RWPE1 (cell line): ENCODE measurements at regions of chr16 and their contacts with region 1.

Region 1: DNA sequence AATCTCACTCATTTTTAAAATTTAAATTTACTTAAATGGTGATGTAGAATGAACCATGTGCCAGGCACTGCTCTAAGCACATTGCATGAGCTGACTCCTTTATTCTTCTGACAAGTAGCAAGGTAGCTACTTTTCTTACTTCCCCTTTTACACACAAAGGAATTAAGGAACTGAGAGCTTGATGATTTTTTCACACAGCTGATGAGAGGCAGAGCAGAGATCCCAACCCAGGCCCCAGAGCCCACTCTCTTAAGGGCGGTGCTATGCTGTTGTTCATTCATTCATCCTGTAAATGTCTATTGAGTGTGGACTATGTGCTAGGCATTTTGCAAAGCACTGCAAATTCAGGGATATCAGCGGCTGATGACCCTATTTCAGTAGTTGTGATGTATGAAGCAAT is 17.9 kb downstream of the SEC14L5 start:
- DNase-seq: no peak
- H3K27ac ChIP-seq: no peak overlapping the region
- CTCF ChIP-seq: no peak

Region 2: GRCh38 chr16:4911831-4912417 is 64.2 kb before region 1 on chr16:
- CTCF ChIA-PET with region 1: no interaction called
- POLR2A ChIA-PET with region 1: no interaction called
- DNase-seq: peak; percentile 23
- H3K27ac ChIP-seq: peak overlapping the region; percentile 48
- CTCF ChIP-seq: no peak

Region 3: GRCh38 chr16:4958510-4959437 is 17.3 kb before region 1 on chr16:
- CTCF ChIA-PET with region 1: no interaction called
- POLR2A ChIA-PET with region 1: interaction called, 10 read pairs
- DNase-seq: no peak
- H3K27ac ChIP-seq: peak overlapping the region; percentile 68; the same call in 1 of the 2 replicates
- CTCF ChIP-seq: no peak